ENCODE measurements at regions of chr10 and their contacts with region 1.

Region 1: DNA sequence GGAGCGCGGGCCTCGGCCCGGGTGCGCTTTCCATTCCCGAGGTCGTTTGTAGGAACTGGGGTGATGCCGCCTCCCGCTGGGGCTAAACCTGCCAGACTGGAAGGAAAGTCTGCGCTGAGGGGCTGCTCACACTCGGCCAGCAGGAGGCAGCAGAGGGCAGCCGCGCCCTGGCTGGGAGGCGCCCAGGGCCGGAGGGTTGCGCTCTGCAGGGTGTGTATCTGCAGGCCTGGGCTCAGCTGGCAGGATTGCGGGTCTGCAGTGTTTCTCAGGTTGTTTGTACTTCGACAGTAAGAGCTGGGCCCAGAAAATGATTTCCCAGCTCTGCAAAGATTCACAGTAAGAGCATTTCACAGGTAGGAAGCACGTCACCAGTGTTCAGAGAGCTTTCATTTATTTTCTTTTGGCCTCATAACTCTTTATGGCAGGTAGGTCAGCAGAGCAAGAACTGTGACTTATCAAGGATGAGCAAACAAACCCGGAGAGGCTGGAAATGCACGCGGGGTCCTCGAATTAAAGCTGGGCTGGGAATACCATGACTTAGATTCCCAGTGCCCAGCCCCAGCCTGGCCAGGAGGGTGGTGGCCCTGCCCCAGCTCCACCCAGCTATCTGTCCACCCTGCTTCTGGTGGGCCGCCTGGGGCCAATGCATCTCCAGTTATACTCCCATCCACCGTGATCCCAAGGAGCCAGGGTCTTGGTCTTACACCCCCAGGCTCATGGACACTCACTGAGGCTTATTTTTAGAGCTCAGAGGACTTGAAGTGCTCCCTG is 15.2 kb upstream of the PPP2R2D start:
- DNase-seq: peak; percentile 37 to 62
- H3K4me3 ChIP-seq: no peak overlapping the region
- H3K27ac ChIP-seq: no peak overlapping the region
- H3K4me1 ChIP-seq: no peaks in the 10 kb centered on the region
- H3K27me3 ChIP-seq: no peaks in the 10 kb centered on the region
- CTCF ChIP-seq: peak; percentile 80 to 94 (median 87)
- POLR2A ChIP-seq: no peak

Region 2: DNA sequence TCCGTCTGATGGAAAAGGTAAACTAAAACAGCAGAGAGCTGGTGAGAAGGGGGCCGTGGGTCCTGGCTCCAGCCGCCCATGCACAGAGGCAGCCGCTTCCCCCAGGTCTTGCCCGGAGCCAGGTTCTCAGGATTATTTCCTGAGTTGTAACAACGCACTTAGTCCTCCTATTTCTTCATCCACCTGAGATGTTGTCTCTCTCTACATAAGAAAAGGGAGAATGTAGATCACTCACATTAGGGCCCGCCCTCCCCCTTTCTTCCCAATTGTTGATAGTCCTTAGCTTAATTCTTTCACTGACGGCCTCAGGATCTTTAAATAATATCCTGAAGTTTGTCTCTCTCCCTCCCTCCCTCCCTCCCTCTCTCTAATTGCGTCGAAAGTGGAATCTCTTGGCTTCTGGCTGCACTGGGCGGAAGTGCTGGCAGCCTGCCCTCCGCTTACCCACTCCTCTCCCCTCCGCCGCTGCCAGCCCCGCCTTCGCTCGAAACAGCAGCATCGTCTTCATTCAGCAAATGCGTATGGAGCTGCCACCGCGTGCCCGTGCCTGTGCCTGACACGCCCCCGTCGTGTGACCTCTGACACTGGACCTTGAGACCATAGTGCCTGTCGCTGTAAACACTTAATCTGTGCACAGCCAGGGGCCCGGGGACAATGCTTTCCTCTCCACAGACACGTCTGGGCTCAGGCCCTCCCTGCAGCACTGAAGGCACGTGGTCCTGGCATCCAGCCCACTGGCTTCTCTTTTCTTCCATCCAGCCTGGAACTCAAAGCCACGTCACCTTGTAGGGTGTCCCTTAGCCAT is 159.3 kb before region 1 on chr10:
- intact Hi-C with region 1: no loop called
- DNase-seq: peak in 1 of 2 donors; percentile 46
- H3K4me3 ChIP-seq: no peak overlapping the region
- H3K27ac ChIP-seq: no peak overlapping the region
- H3K4me1 ChIP-seq: peaks cover 0 to 5% of the 10 kb centered on the region in 2 donors
- H3K27me3 ChIP-seq: no peaks in the 10 kb centered on the region
- CTCF ChIP-seq: no peak
- POLR2A ChIP-seq: no peak

Region 3: GRCh38 chr10:131928248-131929095 is 42.9 kb after region 1 on chr10:
- intact Hi-C with region 1: no loop called
- DNase-seq: no peak
- H3K4me3 ChIP-seq: no peak overlapping the region
- H3K27ac ChIP-seq: no peak overlapping the region
- H3K4me1 ChIP-seq: no peaks in the 10 kb centered on the region
- H3K27me3 ChIP-seq: no peaks in the 10 kb centered on the region
- CTCF ChIP-seq: no peak
- POLR2A ChIP-seq: no peak

Region 4: GRCh38 chr10:132023092-132023811 is 137.7 kb after region 1 on chr10:
- intact Hi-C with region 1: loop called (anchors 10 kb)
- DNase-seq: peak; percentile 64 to 80
- H3K4me3 ChIP-seq: peak overlapping the region in 1 of 2 donors; percentile 11
- H3K27ac ChIP-seq: no peak overlapping the region
- H3K4me1 ChIP-seq: no peaks in the 10 kb centered on the region
- H3K27me3 ChIP-seq: peaks cover 0 to 3% of the 10 kb centered on the region in 2 donors
- CTCF ChIP-seq: peak; percentile 80 to 87 (median 83)
- POLR2A ChIP-seq: no peak

Measured in uterus (tissue), 4 donors.